ENCODE measurements at regions of chr14 and their contacts with region 1.

Region 1: GRCh38 chr14:36373982-36374673 is 53.7 kb upstream of the MBIP start:
- DNase-seq: peak; percentile 86

Region 2: DNA sequence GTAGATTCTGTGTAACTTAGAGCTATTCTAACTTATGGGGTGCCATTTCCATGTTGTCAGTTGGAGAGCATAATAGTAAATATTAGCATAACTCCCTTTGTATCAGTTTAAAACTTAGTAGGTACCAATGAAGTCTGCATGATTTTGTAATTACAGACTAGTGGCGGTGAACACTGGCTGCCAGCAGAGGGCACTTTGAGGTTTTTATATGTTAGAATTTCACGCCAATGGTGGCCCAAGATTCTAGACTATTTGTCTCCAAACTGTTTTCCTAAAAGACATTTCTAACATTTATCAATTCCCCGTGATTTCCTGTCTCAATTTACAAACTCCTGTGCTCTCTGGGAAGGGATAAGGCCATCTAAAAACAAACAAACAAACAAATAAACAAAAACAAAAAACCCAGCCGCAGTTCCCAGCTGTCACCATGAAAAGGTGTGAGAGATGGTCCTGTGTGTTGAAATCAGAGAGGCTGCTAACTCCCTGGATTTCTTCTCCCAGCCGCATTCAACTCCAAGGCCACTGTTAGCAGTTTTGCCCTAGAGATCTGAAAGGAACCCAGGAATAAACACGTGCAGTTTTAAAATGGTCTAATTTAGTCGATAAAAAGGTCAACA is 490.3 kb before region 1 on chr14:
- intact Hi-C with region 1: loop called in 1 of 2 experiments (anchors 5 kb)
- DNase-seq: no peak

Region 3: GRCh38 chr14:35992816-35993683 is 381.1 kb before region 1 on chr14:
- intact Hi-C with region 1: no loop called
- DNase-seq: no peak